Activated B cell treated with CpG ODN at 0.5 μM for 24 hours (primary cell): ENCODE measurements at regions of chr14 and their contacts with region 1.

Region 1: GRCh38 chr14:73759714-73760597 is 45.8 kb upstream of the PNMA1 start:
- DNase-seq: peak; percentile 95
- ATAC-seq: peak; percentile 64
- H3K4me3 Mint-ChIP-seq: peak overlapping the region; percentile 89
- H3K27ac Mint-ChIP-seq: peak overlapping the region; percentile 99
- H3K4me1 Mint-ChIP-seq: peaks cover 86% of the 10 kb centered on the region
- H3K27me3 Mint-ChIP-seq: no peaks in the 10 kb centered on the region
- CTCF ChIP-seq: no peak

Region 2: GRCh38 chr14:73713803-73714655 is 45.9 kb before region 1 on chr14 and contains the start of gene PNMA1:
- CTCF ChIA-PET with region 1: no interaction called
- POLR2A ChIA-PET with region 1: interaction called, 10 read pairs
- intact Hi-C with region 1: loop called (anchors 1 kb)
- DNase-seq: peak; percentile 86
- ATAC-seq: peak; percentile 80
- H3K4me3 Mint-ChIP-seq: peak within 1 kb of the TSS; percentile 95
- H3K27ac Mint-ChIP-seq: peak within 1 kb of the TSS; percentile 92
- H3K4me1 Mint-ChIP-seq: peaks cover 25% of the 10 kb centered on the region
- H3K27me3 Mint-ChIP-seq: no peaks in the 10 kb centered on the region
- CTCF ChIP-seq: no peak
- total RNA-seq, gene PNMA1: 19.9 and 22.2 TPM in 2 replicates

Region 3: DNA sequence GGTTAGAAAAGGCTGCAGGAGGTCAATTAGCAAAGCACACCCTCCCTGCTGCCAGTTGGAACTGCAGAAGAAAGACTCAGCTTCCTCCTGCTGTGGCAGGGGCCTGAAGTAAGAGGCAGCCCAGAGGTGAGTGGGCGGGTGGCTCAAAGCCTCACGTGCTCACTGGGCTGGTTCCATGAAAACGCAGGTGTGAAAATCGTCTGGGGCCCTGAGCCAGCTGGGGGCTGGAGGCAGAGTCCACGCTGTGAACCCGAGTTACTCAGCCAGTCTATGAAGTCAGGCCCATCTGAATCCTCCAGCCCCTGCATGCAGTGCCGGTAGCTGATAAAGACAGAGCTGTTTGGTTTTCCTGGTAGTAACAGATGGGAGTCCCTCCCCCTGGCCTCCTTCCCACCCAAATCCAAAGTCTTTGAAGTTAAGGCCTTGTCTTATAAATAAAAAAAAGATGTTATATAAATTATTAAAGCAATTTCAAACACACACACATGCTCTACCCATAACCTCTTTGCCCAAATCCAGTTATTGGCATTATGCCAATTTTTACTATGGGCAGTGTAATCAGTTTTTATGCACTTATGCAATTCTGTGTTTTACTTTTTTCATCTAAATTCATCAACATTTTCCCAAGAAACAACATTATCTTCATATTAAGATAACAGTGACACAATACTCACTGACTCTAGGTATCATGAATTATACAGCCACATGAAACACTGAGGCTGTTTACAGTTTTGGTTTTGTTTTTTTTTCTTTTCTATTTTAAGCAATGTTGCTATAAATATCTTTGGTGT is 12.1 kb after region 1 on chr14:
- CTCF ChIA-PET with region 1: interaction called, 39 read pairs
- POLR2A ChIA-PET with region 1: interaction called, 493 read pairs
- intact Hi-C with region 1: loop called (anchors 1 kb)
- DNase-seq: peak; percentile 60
- ATAC-seq: peak; percentile 56
- H3K4me3 Mint-ChIP-seq: peak overlapping the region; percentile 74
- H3K27ac Mint-ChIP-seq: peak overlapping the region; percentile 95
- H3K4me1 Mint-ChIP-seq: peaks cover 88% of the 10 kb centered on the region
- H3K27me3 Mint-ChIP-seq: no peaks in the 10 kb centered on the region
- CTCF ChIP-seq: no peak

Region 4: DNA sequence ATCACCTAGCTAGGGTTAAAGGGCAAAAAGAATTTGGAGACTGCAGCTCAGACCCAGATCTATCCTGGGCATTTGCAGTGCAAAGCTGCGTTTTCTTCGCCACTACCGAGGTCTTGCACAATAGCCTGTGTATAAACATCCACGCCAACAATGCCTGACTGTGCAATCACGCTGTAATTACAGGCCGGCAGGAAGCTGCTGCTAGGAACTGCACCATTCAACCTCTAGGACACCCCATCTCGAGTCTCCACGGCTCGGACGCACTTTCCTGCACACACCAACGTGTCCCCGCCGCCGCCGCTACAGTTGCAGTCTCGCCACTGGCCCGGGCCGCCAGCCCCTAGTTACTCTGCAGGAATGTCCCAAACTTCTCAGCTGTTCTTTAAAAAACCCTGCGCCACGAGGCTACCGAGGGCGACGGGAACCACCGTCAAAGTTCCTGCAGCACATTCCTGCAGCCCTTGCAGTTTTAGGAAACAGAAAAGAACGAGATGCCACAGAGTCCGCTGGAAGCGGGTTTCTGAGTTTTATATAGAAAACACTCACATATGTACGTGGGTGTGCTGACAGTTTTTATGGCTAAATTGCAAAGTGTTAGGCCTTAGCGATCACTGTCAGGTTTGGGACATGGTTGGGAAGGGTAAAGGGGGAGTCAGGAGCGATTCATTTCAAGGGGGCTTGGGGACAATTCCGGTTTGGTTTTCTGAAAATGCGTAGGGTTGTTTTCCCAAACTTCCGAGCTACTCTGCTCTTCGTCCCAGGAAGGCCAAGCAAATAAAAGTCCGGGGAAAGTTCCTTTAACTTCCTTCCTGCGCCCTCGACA is 26.1 kb after region 1 on chr14:
- CTCF ChIA-PET with region 1: interaction called, 21 read pairs
- POLR2A ChIA-PET with region 1: interaction called, 346 read pairs
- intact Hi-C with region 1: loop called (anchors 1 kb)
- DNase-seq: peak; percentile 51
- ATAC-seq: peak; percentile 42
- H3K4me3 Mint-ChIP-seq: peak overlapping the region; percentile 93
- H3K27ac Mint-ChIP-seq: peak overlapping the region; percentile 89
- H3K4me1 Mint-ChIP-seq: peaks cover 59% of the 10 kb centered on the region
- H3K27me3 Mint-ChIP-seq: no peaks in the 10 kb centered on the region
- CTCF ChIP-seq: no peak

Region 5: GRCh38 chr14:73949744-73950734 is 190.1 kb after region 1 on chr14 and contains the starts of genes COQ6 and FAM161B:
- CTCF ChIA-PET with region 1: no interaction called
- POLR2A ChIA-PET with region 1: interaction called, 3 read pairs
- intact Hi-C with region 1: loop called (anchors 1 kb)
- DNase-seq: peak; percentile 84
- ATAC-seq: peak; percentile 92
- H3K4me3 Mint-ChIP-seq: peak within 1 kb of the TSS; percentile 99
- H3K27ac Mint-ChIP-seq: peak within 1 kb of the TSS; percentile 91
- H3K4me1 Mint-ChIP-seq: peaks cover 17% of the 10 kb centered on the region
- H3K27me3 Mint-ChIP-seq: no peaks in the 10 kb centered on the region
- CTCF ChIP-seq: no peak
- total RNA-seq, gene COQ6: 23.0 and 30.7 TPM in 2 replicates
- total RNA-seq, gene FAM161B: 2.3 TPM in 2 replicates

Region 6: DNA sequence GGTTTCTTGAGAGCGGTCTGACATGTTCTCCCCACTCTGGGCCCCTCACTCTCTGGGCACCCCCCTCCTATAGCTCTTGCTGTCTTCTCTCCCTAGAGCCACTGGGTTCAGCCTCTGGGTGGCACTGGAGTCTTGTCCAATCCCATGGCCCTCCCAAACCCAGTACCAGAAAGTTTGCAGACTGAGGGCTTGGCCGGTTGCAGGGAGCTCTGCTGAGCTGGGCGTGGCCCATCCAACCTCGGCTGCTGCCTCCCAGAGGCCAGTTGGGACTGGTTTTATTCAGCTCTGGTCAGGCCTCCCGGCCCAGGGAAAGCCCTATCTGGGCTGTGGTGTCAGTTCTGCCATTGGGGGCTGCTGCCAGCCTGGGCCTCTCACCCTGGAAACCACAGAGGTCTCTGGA is 771.5 kb after region 1 on chr14:
- CTCF ChIA-PET with region 1: no interaction called
- POLR2A ChIA-PET with region 1: no interaction called
- intact Hi-C with region 1: no loop called
- DNase-seq: no peak
- ATAC-seq: no peak
- H3K4me3 Mint-ChIP-seq: no peak overlapping the region
- H3K27ac Mint-ChIP-seq: no peak overlapping the region
- H3K4me1 Mint-ChIP-seq: peaks cover 3% of the 10 kb centered on the region
- H3K27me3 Mint-ChIP-seq: no peaks in the 10 kb centered on the region
- CTCF ChIP-seq: no peak